Left cardiac atrium (tissue), 4 donors: ENCODE measurements at regions of chr1 and their contacts with region 1.

Region 1: DNA sequence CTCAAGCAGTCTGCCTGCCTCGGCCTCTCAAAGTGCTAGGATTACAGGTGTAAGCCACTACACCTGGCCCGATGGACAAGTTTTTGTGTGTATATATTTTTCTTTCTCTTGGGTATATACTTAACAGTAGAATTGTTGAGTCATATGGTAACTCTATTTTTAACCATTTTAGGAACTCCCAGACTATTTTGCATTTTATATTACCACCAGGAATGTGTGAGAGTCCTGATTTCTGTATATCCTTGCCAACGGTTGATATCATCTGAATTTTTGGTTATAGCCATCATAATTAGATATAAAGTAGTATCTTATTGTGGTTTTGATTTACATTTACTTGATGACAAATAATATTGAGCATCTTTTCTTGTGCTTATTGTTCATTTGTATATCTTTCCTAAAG is 20.7 kb downstream of the FNBP1L start:
- DNase-seq: no peak
- ATAC-seq: no peak

Region 2: DNA sequence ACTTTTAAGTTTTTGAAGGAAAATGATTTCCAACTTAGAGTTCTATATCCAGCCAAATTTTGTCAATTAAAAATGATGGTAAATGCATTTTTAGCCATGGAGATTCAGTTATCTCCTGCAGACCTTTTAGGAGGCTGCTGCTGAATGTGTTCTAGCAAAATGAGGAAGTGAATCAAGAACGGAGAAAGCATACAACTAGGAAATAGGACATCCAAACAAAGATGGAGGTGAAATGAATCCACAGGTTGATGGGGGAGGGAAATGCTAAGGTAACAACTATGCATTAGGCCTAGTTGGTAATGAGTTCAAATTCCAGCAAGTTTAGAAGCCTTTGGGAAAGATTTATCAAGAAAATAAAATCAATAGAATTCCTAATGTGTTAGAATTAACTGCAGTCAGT is 59.8 kb after region 1 on chr1:
- intact Hi-C with region 1: loop called (anchors 10 kb)
- DNase-seq: no peak
- ATAC-seq: no peak

Region 3: DNA sequence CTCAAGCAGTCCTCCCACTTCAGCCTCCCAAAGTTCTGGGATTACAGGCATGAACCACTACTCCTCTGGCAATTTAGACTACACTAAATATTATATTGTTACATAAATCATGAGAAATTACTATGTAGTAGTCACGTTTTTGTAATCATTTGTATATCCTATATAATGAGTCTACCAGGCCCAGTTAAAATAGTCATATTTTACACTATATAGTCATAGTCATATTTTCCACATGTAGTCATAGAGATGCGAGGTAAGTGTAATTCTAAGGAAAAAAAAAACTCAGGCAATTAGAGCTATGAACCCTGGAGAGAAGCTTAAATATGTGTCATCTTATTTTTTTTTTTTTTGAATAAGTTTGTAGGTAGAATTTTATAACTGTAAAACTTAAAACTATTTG is 69.3 kb after region 1 on chr1:
- intact Hi-C with region 1: loop called in 1 of 2 experiments (anchors 10 kb)
- DNase-seq: no peak
- ATAC-seq: no peak

Region 4: DNA sequence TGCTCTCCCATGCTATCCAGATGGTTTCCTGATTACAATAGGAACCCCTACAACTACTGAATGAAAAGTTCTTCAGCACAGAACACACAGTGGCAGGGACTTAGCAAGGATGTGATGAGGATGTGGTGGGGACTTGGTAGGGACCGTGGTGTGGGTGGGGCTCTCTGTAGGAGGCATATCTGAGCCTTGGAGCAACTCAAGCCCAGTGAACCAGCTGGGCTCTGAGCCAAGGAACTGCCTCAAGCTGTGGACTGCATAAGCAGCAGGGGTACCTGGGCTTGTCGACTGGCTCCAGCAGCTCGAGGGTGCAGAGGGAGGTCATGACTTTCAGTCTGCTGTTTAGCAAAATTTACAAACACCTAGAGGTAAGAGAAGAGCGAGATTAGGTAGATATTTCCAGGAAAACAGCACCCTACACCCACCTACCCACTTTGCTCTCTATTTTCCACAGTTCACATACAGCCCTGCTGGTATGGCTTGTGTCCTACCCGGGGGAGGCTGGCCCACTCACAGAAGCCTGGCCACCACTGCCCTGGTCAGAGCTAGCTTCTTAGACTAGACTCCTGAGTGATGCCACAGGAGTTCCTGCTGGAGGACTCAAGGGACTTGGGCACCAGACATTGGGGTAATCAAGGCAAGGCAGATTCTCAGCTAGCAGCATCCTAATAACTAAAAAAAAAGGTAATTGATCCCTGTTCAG is 527.3 kb after region 1 on chr1:
- intact Hi-C with region 1: no loop called
- DNase-seq: no peak
- ATAC-seq: peak in 1 of 2 donors; percentile 32